ENCODE measurements at regions of chr13 and their contacts with region 1.

Region 1: DNA sequence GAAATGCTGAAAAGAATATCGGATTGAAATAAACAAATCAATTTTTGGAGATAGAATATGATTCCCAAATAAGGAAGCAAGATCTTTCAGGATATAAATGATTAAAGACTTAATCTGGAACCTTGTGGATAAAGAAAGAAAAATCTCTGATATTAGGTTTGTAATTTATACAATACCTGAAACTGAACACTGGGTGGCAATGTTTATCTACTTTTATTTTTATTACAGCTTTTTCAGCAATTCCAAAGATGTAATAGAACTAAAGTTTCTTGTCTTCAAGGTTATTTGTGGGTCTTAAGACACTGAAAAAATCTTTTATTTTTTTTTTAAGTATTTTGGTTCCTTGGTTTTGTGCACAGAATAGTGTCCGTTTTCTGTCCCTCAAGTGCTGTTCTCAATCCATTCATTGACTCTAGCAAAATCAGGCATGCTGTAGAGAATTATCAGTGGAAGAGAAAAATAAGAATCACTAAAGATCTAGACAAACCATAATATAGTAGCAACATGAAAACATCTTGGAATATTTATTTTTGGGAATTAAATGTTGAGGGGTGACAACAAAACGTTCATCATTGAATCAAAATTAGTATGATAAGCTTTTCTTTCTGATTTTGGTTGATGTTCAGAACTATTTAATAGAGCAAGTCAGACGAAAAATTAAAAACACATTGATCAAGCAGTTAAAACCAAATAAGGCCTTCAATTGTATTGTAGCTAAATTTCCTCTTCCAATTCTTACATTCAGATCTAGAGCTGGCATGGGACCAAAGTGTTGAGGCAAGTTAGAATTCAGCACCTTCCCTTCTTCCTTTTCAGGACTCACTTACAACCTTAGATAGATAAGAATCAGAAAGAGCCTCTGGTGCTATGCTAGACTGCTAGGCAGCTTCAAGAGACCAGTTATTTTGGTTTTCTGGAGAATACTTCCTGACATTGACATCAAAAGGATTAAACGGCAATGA is 704.4 kb upstream of the PCDH20 start:
- DNase-seq: no peak
- ATAC-seq: peak; percentile 54
- H3K4me3 ChIP-seq: no peak overlapping the region
- H3K27ac ChIP-seq: no peak overlapping the region
- H3K4me1 ChIP-seq: no peaks in the 10 kb centered on the region
- H3K27me3 ChIP-seq: no peaks in the 10 kb centered on the region
- CTCF ChIP-seq: peak in 2 of 3 experiments; percentile 36 to 45; a peak in 3 of 6 replicates
- EP300 ChIP-seq: no peak
- POLR2A ChIP-seq: no peak
- RAD21 ChIP-seq: peak; percentile 63

Region 2: DNA sequence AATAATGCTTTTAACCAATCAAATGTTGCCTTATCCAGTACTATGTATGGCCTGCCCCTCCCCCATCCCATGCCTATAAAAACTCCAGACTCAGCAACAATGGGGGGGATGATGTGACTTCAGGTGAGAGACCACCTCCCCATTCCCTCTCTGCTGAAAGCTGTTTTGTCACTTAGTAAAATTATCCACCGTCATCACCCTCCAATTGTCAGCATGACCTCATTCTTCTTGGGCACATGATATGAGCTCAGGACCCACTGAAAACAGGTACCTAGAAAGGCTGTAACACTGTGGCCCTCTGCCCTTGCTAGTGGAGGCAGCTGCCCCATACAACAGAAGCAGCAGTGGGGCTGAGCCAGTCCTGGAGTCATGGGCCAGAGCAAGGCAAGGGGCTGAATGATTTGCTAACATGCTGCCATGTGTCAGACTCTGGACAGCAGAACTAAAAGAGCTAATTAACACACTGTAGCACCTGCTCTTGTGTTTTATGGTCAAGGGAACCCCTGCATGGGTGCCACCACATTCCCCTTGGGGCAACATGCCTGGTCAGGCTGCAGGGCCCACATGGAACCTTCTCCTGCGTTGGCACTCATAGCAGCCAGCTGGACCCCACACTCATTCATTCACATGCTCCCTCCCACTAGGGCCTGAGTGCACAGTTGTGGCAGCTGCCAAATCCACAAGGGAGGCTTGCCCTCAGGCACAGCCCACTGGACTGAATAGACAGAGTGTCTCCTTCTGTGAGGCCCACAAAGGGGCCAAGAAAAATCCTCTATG is 17.8 kb after region 1 on chr13:
- CTCF ChIA-PET with region 1: interaction called, 12 read pairs
- POLR2A ChIA-PET with region 1: no interaction called
- RAD21 ChIA-PET with region 1: interaction called, 6 read pairs
- SMC1A ChIA-PET with region 1: interaction called, 12 read pairs
- in situ Hi-C with region 1: no loop called
- intact Hi-C with region 1: no loop called
- DNase-seq: no peak
- ATAC-seq: no peak
- H3K4me3 ChIP-seq: no peak overlapping the region
- H3K27ac ChIP-seq: no peak overlapping the region
- H3K4me1 ChIP-seq: no peaks in the 10 kb centered on the region
- H3K27me3 ChIP-seq: no peaks in the 10 kb centered on the region
- CTCF ChIP-seq: no peak
- EP300 ChIP-seq: no peak
- POLR2A ChIP-seq: no peak
- RAD21 ChIP-seq: no peak

Region 3: GRCh38 chr13:62305756-62306155 is 185.7 kb after region 1 on chr13:
- CTCF ChIA-PET with region 1: interaction called, 11 read pairs
- POLR2A ChIA-PET with region 1: no interaction called
- RAD21 ChIA-PET with region 1: interaction called, 14 read pairs
- SMC1A ChIA-PET with region 1: interaction called, 8 read pairs
- in situ Hi-C with region 1: no loop called
- intact Hi-C with region 1: loop called (anchors 10 kb)
- DNase-seq: peak; percentile 51
- ATAC-seq: peak; percentile 95
- H3K4me3 ChIP-seq: peak overlapping the region; percentile 13; the same call in 1 of the 2 replicates
- H3K27ac ChIP-seq: peak overlapping the region; percentile 69
- H3K4me1 ChIP-seq: peaks cover 12% of the 10 kb centered on the region
- H3K27me3 ChIP-seq: no peaks in the 10 kb centered on the region
- CTCF ChIP-seq: no peak
- EP300 ChIP-seq: no peak
- POLR2A ChIP-seq: no peak
- RAD21 ChIP-seq: 0 out of 2 replicates have a peak, but pooled peaks have one; percentile 9

Region 4: DNA sequence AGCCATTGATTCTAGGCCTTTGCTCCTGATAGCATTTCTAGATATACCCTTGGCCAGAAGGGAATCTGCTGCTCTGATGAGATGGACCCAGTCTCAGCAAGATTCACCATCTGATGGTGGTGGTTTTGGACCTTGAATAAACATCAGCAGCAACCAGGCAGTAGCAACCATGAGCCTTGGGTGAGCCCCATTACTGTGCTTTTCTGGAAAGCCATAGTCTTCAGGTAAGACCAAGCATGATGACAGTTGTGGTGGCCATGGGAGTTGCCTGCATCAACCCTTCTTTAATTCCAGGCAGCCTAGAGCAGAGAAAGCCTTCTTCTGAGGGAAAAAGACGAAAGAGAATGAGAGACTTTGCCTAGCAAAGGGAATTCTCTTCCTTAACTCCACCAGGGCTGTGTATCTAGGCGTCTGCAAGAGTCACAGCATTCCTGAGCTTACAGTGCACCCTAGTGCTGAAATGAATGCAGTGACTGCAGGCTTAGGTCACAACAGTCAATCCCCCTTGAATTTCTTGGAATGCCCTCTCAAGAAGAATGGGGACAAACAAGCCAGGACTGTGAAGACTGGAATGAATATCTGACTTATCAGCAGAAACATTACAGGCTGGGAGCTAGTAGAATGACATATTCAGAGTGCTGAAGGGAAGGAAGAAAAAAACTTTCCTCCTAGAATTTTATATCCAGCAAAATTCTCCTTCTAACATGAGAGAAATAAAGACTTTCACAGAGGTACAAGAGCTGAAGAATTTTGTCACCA is 238.0 kb after region 1 on chr13:
- CTCF ChIA-PET with region 1: interaction called, 73 read pairs
- POLR2A ChIA-PET with region 1: no interaction called
- RAD21 ChIA-PET with region 1: interaction called, 63 read pairs
- SMC1A ChIA-PET with region 1: interaction called, 103 read pairs
- in situ Hi-C with region 1: no loop called
- intact Hi-C with region 1: loop called (anchors 1 kb)
- DNase-seq: peak; percentile 12
- ATAC-seq: peak; percentile 97
- H3K4me3 ChIP-seq: no peak overlapping the region
- H3K27ac ChIP-seq: no peak overlapping the region
- H3K4me1 ChIP-seq: no peaks in the 10 kb centered on the region
- H3K27me3 ChIP-seq: no peaks in the 10 kb centered on the region
- CTCF ChIP-seq: peak; percentile 66 to 79 (median 73)
- EP300 ChIP-seq: no peak
- POLR2A ChIP-seq: no peak
- RAD21 ChIP-seq: peak; percentile 94

Region 5: GRCh38 chr13:62544928-62545327 is 424.9 kb after region 1 on chr13:
- CTCF ChIA-PET with region 1: interaction called, 9 read pairs
- POLR2A ChIA-PET with region 1: no interaction called
- RAD21 ChIA-PET with region 1: interaction called, 9 read pairs
- SMC1A ChIA-PET with region 1: interaction called, 5 read pairs
- in situ Hi-C with region 1: no loop called
- intact Hi-C with region 1: loop called (anchors 10 kb)
- DNase-seq: no peak
- ATAC-seq: no peak
- H3K4me3 ChIP-seq: no peak overlapping the region
- H3K27ac ChIP-seq: no peak overlapping the region
- H3K4me1 ChIP-seq: no peaks in the 10 kb centered on the region
- H3K27me3 ChIP-seq: no peaks in the 10 kb centered on the region
- CTCF ChIP-seq: peak in 1 of 3 experiments; percentile 28; a peak in 1 of 6 replicates
- EP300 ChIP-seq: no peak
- POLR2A ChIP-seq: no peak
- RAD21 ChIP-seq: peak; percentile 47

Measured in GM12878 (cell line).